Sigmoid colon (tissue), 7 donors: ENCODE measurements at regions of chr5 and their contacts with region 1.

Region 1: DNA sequence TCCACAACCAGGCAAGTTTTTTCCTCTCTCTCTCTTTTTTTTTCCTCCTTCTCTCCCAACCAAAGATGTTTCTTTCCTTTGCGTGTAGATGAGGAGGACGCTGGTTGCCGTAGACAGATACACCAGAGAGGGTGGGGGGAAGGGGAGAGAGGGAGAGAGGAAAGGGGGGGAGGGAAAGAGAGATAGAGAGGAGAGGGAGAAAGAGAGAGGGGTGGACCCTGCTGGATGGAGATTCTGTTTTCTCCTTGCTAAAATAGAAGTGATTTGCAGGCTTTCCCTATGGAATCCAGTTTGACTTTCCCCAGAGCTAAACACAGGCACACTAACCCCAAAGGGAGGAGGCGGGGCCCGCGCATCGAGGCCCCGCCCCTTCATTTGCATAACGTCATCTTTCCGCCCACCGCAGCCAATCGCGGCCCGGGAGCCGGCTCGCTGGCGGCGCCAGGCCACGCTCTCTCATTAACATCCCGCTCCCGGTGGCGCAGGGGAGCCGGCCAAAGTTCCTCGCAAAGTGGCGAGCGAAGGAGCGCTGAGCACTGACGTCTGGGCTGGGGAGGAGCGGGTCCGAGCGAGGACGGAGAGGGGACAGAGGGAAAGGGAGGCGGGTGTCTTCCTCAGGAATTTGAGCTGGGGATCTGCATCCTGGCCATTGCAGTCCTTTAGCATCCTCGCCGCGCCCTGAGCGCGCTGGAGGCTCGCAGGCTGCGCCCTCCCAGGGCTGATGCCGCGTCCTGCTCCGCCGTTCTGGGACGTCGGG is 487 bp upstream of the EBF1 start:
- DNase-seq: peak; percentile 95
- H3K4me3 ChIP-seq: peak overlapping the region; percentile 35 to 59 (median 52)
- H3K27ac ChIP-seq: peak overlapping the region; percentile 72 to 81 (median 77)
- H3K4me1 ChIP-seq: peaks cover 0 to 50% (median 40%) of the 10 kb centered on the region in 4 donors
- H3K27me3 ChIP-seq: peaks cover 54 to 99% (median 83%) of the 10 kb centered on the region in 3 donors
- CTCF ChIP-seq: no peak
- EP300 ChIP-seq: no peak
- POLR2A ChIP-seq: peak; percentile 37 to 43

Region 2: GRCh38 chr5:159058716-159059636 is 41.2 kb before region 1 on chr5:
- intact Hi-C with region 1: loop called (anchors 5 kb)
- DNase-seq: no peak
- H3K4me3 ChIP-seq: no peak overlapping the region
- H3K27ac ChIP-seq: no peak overlapping the region
- H3K4me1 ChIP-seq: no peaks in the 10 kb centered on the region
- H3K27me3 ChIP-seq: no peaks in the 10 kb centered on the region
- CTCF ChIP-seq: no peak
- EP300 ChIP-seq: no peak
- POLR2A ChIP-seq: no peak